B cell (primary cell): ENCODE measurements at regions of chr10 and their contacts with region 1.

Region 1: DNA sequence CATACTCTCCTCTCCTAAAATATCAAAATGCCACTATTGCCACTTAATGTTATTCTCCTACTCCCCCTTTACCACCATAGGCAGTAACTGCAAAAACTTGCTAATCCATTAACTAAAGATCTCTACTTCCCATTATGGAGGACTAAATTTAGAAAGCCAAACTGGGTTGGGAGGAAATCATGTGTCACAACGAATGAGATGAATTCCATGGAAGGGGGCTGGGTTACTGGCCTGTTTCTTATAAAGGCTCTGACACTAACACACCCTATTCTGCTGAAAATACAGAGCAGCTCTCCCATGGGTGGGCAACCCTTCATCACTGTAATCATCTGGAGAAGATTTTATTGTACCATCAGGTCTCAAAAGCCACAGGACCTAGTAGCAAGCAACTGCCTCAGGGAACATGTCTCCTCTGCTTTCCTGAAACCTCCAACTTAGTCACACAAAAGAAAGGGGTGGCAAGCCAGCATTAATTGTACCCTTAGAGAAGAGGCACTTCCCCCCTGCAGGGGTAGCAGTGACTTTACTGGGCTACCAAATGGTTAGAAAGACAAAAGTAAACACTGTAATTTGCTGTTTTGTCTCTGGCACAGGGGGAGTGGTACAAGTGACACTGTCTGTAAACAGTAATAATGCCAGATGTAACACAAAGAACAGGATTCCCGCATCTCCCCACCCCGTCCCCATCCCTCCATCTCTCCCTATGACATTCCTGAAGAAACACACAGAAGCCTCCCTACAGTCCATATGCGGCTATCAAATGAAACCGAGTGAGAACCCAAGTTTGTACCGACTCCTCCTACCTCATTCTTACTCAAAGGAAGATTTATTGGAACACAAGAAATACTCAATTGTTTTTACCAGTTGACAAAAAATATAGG is 81.6 kb downstream of the ARMH3 start:
- DNase-seq: no peak
- ATAC-seq: no peak
- H3K4me3 ChIP-seq: peak overlapping the region in 1 of 5 experiments; percentile 56
- H3K4me3 Mint-ChIP-seq: peak overlapping the region; percentile 90
- H3K27ac ChIP-seq: peak overlapping the region; percentile 77 to 80
- H3K27ac Mint-ChIP-seq: peak overlapping the region; percentile 97
- H3K4me1 ChIP-seq: peaks cover 54 to 58% of the 10 kb centered on the region in 2 donors
- H3K4me1 Mint-ChIP-seq: peaks cover 60% of the 10 kb centered on the region
- H3K27me3 ChIP-seq: no peaks in the 10 kb centered on the region
- H3K27me3 Mint-ChIP-seq: no peaks in the 10 kb centered on the region
- CTCF ChIP-seq: no peak

Region 2: GRCh38 chr10:101986625-101986973 is 12.3 kb after region 1 on chr10:
- CTCF ChIA-PET with region 1: interaction called, 3 read pairs
- POLR2A ChIA-PET with region 1: interaction called, 6 read pairs
- intact Hi-C with region 1: loop called (anchors 2 kb)
- DNase-seq: peak; percentile 71
- ATAC-seq: peak; percentile 85
- H3K4me3 ChIP-seq: peak overlapping the region in 3 of 5 experiments; percentile 11 to 39 (median 30)
- H3K4me3 Mint-ChIP-seq: peak overlapping the region; percentile 77
- H3K27ac ChIP-seq: peak overlapping the region; percentile 86 to 87
- H3K27ac Mint-ChIP-seq: peak overlapping the region; percentile 86
- H3K4me1 ChIP-seq: peaks cover 25 to 28% of the 10 kb centered on the region in 2 donors
- H3K4me1 Mint-ChIP-seq: peaks cover 23% of the 10 kb centered on the region
- H3K27me3 ChIP-seq: no peaks in the 10 kb centered on the region
- H3K27me3 Mint-ChIP-seq: no peaks in the 10 kb centered on the region
- CTCF ChIP-seq: no peak

Region 3: GRCh38 chr10:102040305-102041050 is 66.1 kb after region 1 on chr10:
- CTCF ChIA-PET with region 1: no interaction called
- POLR2A ChIA-PET with region 1: no interaction called
- intact Hi-C with region 1: no loop called
- DNase-seq: no peak
- ATAC-seq: no peak
- H3K4me3 ChIP-seq: no peak overlapping the region
- H3K4me3 Mint-ChIP-seq: no peak overlapping the region
- H3K27ac ChIP-seq: no peak overlapping the region
- H3K27ac Mint-ChIP-seq: no peak overlapping the region
- H3K4me1 ChIP-seq: peaks cover 0 to 3% of the 10 kb centered on the region in 2 donors
- H3K4me1 Mint-ChIP-seq: peaks cover 21% of the 10 kb centered on the region
- H3K27me3 ChIP-seq: no peaks in the 10 kb centered on the region
- H3K27me3 Mint-ChIP-seq: no peaks in the 10 kb centered on the region
- CTCF ChIP-seq: no peak